ENCODE measurements at regions of chr2 and their contacts with region 1.

Region 1: DNA sequence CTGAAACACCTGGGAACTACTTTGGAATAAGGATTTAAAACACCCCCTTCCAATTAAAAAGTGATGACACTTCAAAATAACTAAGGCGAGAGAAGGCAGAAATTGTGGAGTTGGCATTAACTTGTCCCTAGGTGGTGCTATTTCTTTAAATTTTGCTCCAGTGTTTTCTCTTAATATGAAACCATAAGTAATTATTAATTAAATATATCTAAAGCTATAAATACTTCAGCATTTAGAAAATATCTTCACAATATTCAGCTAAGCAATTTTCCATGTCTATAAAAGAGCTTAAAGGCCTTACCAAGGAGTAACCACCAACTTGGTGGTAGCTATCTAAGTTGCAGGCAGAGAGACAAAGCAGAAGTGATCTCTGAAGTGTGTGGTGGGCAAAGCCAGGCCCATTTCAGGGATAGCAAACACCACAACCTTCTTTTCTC is 186.8 kb upstream of the PGAP1 start:
- DNase-seq: no peak
- ATAC-seq: no peak
- H3K4me3 Mint-ChIP-seq: no peak overlapping the region
- H3K27ac Mint-ChIP-seq: peak overlapping the region; percentile 82
- H3K4me1 Mint-ChIP-seq: peaks cover 32% of the 10 kb centered on the region
- H3K27me3 Mint-ChIP-seq: no peaks in the 10 kb centered on the region
- CTCF ChIP-seq: peak; percentile 75

Region 2: DNA sequence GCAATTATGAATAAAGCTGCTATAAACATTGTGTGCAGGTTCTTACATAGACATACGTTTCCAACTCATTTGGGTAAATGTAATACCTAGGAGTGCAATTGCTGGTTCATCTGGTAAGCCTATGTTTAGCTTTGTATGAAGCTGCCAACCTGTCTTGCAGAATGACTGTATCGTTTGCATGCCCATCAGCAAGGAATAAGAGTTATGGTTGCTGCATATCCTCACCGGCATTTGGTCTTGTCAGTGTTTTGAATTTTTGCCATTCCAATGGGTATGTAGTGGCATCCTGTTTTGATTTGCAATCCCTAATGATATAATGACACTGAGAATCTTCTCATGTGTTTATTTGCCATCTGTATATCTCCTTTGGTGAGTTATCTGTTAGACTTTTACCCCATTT is 453.0 kb before region 1 on chr2:
- CTCF ChIA-PET with region 1: no interaction called
- POLR2A ChIA-PET with region 1: no interaction called
- intact Hi-C with region 1: no loop called
- DNase-seq: no peak
- ATAC-seq: no peak
- H3K4me3 Mint-ChIP-seq: no peak overlapping the region
- H3K27ac Mint-ChIP-seq: no peak overlapping the region
- H3K4me1 Mint-ChIP-seq: no peaks in the 10 kb centered on the region
- H3K27me3 Mint-ChIP-seq: no peaks in the 10 kb centered on the region
- CTCF ChIP-seq: no peak

Region 3: GRCh38 chr2:196823750-196824522 is 289.4 kb before region 1 on chr2:
- CTCF ChIA-PET with region 1: no interaction called
- POLR2A ChIA-PET with region 1: no interaction called
- intact Hi-C with region 1: no loop called
- DNase-seq: no peak
- ATAC-seq: no peak
- H3K4me3 Mint-ChIP-seq: no peak overlapping the region
- H3K27ac Mint-ChIP-seq: no peak overlapping the region
- H3K4me1 Mint-ChIP-seq: peaks cover 2% of the 10 kb centered on the region
- H3K27me3 Mint-ChIP-seq: peaks cover 11% of the 10 kb centered on the region
- CTCF ChIP-seq: no peak

Region 4: GRCh38 chr2:196873511-196873910 is 239.8 kb before region 1 on chr2:
- CTCF ChIA-PET with region 1: no interaction called
- POLR2A ChIA-PET with region 1: no interaction called
- intact Hi-C with region 1: no loop called
- DNase-seq: no peak
- ATAC-seq: no peak
- H3K4me3 Mint-ChIP-seq: no peak overlapping the region
- H3K27ac Mint-ChIP-seq: no peak overlapping the region
- H3K4me1 Mint-ChIP-seq: peaks cover 10% of the 10 kb centered on the region
- H3K27me3 Mint-ChIP-seq: no peaks in the 10 kb centered on the region
- CTCF ChIP-seq: no peak

Region 5: GRCh38 chr2:196914867-196915460 is 198.3 kb before region 1 on chr2:
- CTCF ChIA-PET with region 1: no interaction called
- POLR2A ChIA-PET with region 1: no interaction called
- intact Hi-C with region 1: no loop called
- DNase-seq: peak; percentile 41
- ATAC-seq: peak; percentile 99
- H3K4me3 Mint-ChIP-seq: peak overlapping the region; percentile 18
- H3K27ac Mint-ChIP-seq: peak overlapping the region; percentile 92
- H3K4me1 Mint-ChIP-seq: peaks cover 29% of the 10 kb centered on the region
- H3K27me3 Mint-ChIP-seq: no peaks in the 10 kb centered on the region
- CTCF ChIP-seq: no peak

Region 6: DNA sequence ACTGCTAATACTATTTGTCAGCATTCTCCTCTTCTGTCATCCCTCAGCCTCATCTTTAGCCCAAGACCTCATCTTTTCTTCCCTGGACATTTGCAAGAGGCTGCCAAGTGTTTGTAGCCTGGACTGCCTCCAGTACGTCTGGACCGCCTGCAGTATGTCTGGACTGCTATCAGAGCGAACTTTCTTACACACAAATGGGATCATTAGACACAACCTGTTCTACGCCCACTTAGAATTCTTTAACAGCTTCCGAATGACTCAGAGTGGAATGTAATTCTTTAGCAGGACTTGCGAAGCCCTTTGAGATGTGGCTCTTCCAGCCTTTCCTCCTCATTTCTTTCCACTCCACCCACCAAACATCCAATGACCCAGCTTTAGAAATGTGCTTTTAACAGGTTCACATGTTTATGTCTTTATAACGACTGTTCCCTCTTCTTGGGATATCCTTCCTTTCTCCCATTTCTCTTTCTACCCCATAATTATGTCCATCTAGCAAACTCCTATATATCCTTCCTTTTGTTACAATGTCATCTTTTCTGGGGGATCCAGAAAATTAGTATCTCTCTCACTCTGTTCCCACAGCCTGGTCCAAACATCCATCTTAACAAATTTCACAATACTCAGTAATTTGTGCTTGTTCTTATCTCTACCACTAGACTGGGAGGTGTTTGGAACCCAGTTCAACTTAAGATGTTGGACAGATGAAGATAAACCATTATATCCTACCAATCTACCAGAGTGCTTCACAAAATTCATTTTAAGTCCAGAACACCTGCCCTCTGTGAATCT is 15.5 kb before region 1 on chr2:
- CTCF ChIA-PET with region 1: interaction called, 21 read pairs
- POLR2A ChIA-PET with region 1: no interaction called
- intact Hi-C with region 1: no loop called
- DNase-seq: no peak
- ATAC-seq: no peak
- H3K4me3 Mint-ChIP-seq: no peak overlapping the region
- H3K27ac Mint-ChIP-seq: peak overlapping the region; percentile 6
- H3K4me1 Mint-ChIP-seq: peaks cover 11% of the 10 kb centered on the region
- H3K27me3 Mint-ChIP-seq: no peaks in the 10 kb centered on the region
- CTCF ChIP-seq: no peak

Region 7: DNA sequence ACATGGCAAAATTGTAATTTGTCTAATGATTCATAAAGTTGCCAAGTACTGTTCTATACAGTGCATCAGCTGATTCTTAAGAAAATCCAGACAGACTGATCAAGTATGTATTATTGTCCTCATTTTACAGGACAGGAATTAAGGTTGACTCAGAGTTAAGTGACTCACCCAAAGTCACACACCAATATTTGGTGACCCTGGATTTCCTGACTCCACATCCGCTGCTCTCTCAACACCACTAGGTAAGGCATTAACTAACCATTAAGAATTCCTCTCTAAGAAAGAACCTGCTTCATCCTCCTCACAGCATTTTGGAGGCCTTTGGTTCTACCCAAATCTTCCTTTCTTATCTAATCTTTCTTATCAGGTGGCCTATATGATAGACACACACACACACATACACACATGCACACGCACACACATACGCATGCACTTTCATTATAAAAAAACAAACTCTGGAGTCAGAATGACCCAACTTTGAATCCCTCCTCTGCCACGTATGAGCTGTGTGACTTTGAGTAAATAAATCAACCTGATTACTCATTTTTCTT is 46.4 kb after region 1 on chr2:
- CTCF ChIA-PET with region 1: interaction called, 17 read pairs
- POLR2A ChIA-PET with region 1: interaction called, 3 read pairs
- intact Hi-C with region 1: no loop called
- DNase-seq: peak; percentile 58
- ATAC-seq: peak; percentile 86
- H3K4me3 Mint-ChIP-seq: no peak overlapping the region
- H3K27ac Mint-ChIP-seq: peak overlapping the region; percentile 79
- H3K4me1 Mint-ChIP-seq: peaks cover 74% of the 10 kb centered on the region
- H3K27me3 Mint-ChIP-seq: no peaks in the 10 kb centered on the region
- CTCF ChIP-seq: no peak

Region 8: GRCh38 chr2:197191177-197191939 is 78.1 kb after region 1 on chr2:
- CTCF ChIA-PET with region 1: interaction called, 42 read pairs
- POLR2A ChIA-PET with region 1: no interaction called
- intact Hi-C with region 1: loop called (anchors 5 kb)
- DNase-seq: no peak
- ATAC-seq: peak; percentile 40
- H3K4me3 Mint-ChIP-seq: peak overlapping the region; percentile 41
- H3K27ac Mint-ChIP-seq: peak overlapping the region; percentile 78
- H3K4me1 Mint-ChIP-seq: peaks cover 76% of the 10 kb centered on the region
- H3K27me3 Mint-ChIP-seq: no peaks in the 10 kb centered on the region
- CTCF ChIP-seq: peak; percentile 84

Region 9: DNA sequence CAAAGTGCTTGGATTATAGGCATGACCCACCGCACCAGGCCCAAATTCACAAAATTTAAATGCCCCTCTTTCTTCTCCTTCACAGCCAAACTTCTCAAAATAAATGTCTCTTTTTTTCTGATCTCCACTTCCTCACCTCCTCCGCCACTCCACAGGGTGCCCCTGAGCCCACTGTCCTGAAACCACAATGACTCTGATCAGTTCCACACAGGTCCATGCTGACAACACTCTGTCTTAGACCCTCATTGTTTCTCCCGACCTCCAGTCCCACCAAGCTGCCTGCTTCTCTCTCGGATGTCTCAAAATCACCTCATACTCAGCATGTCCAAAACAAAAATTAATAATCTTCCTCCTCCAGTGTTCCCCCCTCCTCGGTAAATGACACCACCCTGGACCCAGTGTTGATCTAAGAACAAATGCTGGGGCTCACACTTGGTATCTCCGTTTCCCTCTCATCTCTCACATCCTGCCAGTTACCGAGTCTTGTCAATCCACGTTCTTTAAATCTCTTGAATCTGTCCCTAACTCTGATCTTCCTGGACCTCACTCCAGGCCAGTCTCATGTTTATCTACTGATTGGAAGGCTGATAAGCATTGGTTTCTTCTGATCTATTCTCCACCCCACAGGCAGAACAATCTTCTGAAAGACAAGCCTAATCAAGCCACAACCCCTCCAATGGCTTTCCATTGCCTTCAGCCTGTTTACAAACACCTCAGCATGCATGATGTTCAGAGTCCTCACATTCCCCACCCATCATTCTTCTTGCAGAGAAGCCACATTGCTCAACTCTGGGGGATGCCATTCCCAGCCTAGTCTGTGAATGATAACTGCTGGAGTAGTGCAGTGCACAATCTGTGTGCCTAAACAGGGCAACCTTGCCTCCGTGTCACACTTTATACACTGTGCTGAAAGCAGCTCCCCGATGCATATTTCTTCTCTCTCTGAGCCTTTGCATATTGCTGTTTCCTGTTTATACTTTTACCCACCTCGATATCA is 209.7 kb after region 1 on chr2:
- CTCF ChIA-PET with region 1: interaction called, 15 read pairs
- POLR2A ChIA-PET with region 1: interaction called, 4 read pairs
- intact Hi-C with region 1: no loop called
- DNase-seq: peak; percentile 37
- ATAC-seq: peak; percentile 54
- H3K4me3 Mint-ChIP-seq: peak overlapping the region; percentile 61
- H3K27ac Mint-ChIP-seq: peak overlapping the region; percentile 95
- H3K4me1 Mint-ChIP-seq: peaks cover 72% of the 10 kb centered on the region
- H3K27me3 Mint-ChIP-seq: no peaks in the 10 kb centered on the region
- CTCF ChIP-seq: no peak

Region 10: DNA sequence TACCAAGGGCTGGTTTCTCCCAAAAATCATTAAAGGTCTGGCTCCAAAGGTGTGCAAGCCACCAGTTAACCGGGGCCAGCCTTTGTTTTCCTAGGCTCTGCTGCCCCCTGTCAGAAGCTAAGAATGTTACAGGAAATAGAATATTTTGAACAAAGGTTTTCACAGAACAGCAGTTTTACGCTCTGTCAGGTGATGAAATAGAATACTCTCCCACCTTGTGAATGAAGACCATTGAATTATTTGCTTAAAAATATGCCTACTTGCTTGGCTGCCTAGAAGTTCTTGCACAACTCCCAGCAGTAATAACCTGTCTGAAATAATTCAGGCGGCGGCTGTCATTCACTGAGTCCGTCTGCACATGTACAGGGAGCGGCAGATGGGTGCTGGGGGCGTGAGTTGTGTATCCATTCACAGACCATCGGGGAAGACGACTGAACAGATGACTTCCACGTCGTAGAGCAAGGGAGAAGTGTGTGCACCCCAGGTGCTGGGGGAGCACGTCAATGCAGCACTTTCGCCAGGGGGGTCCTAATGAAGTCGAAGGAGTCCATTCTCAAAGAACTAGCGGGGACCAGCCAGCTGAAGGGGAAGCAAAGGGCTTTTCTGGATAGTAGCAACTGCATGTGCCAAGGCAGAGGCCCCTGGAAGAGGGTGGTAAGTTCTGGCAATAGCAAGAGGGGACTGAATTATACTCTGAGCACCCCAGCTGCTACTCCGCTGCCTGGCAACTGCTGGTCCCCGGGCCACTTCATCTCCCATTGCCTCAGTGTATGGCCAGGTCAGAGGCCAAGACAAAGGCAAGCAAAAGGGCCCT is 265.4 kb after region 1 on chr2:
- CTCF ChIA-PET with region 1: interaction called, 49 read pairs
- POLR2A ChIA-PET with region 1: no interaction called
- intact Hi-C with region 1: loop called (anchors 5 kb)
- DNase-seq: peak; percentile 71
- ATAC-seq: peak; percentile 86
- H3K4me3 Mint-ChIP-seq: no peak overlapping the region
- H3K27ac Mint-ChIP-seq: no peak overlapping the region
- H3K4me1 Mint-ChIP-seq: peaks cover 24% of the 10 kb centered on the region
- H3K27me3 Mint-ChIP-seq: no peaks in the 10 kb centered on the region
- CTCF ChIP-seq: peak; percentile 92

Measured in activated CD8-positive, alpha-beta T cell treated with anti-CD3 and anti-CD28 coated beads for 36 hours (primary cell).